Cardiac septum (tissue), 1 donor: ENCODE measurements at regions of chr5 and their contacts with region 1.

Region 1: GRCh38 chr5:16160706-16161105 is 18.9 kb downstream of the MARCHF11 start:
- DNase-seq: no peak

Region 2: DNA sequence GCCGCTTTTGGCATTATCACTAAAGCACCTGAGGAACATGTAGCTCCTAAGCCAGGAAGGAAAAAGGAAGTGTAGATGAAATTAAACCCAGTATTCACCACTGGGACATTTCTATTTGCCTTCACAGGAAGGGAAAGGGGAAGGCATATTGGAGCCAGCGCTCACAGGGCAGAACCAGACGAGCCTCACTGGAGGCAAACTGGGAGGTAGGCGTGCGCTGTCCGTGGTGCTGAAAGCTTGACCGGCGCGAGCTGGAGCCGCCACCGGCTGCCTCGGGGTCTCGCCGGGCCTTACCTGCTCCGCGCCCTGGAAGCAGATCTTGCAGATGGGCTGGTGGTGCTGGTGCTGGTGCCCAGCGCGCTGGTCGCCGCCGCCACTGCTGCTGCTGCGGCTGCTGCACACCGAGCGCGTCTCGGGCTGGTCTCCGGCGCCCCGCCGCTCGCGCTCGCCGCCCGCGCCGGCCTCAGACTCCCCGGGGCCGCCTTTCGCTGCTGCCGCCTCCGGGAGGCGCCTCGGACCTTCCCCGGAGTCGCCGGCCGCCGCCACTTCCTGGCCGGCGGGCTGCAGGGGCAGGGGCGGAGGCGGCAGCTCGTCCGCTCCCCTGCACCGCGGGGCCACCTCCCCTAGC is 18.2 kb after region 1 on chr5:
- intact Hi-C with region 1: no loop called
- DNase-seq: peak; percentile 82

Region 3: GRCh38 chr5:16944816-16945562 is 784.3 kb after region 1 on chr5:
- intact Hi-C with region 1: no loop called
- DNase-seq: no peak

Region 4: DNA sequence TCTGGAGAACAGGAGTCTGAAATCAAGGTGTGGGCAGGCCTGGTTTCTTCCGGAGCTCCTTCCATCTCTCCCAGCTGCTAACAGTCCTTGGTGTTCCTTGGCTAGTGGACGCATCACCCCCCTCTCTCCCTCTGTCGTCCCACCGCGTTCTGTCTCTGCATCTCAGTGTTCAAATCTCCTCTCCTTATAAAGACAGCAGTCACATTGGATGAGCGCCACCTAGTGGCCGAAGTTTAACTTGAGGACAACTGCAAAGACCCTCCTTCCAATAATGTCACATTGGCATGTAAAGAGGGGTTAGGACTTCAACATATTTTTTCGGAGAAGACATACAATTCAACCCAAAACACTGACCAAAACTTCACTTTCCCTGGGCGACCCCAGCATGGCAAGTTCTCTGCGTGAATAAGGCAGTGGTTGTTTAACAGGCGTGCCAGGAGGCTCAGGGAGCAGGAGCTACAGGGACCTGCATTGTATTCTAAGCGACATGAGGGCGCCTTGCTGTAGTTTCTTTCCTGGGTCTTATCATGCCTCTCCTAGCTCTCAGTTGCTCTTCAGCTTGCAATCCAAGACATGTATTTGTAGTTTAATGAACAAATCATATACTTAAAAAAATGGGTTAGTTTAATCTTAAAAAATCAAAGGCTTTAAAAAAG is 1028.8 kb after region 1 on chr5:
- intact Hi-C with region 1: loop called (anchors 10 kb)
- DNase-seq: no peak